Activated CD8-positive, alpha-beta T cell treated with anti-CD3 and anti-CD28 coated beads, Interleukin-2, amount 10 ng/mL, durations not matched to agents 7 days and 5 days (primary cell): ENCODE measurements at regions of chr6 and their contacts with region 1.

Region 1: GRCh38 chr6:157021344-157021992 is 244.3 kb downstream of the ARID1B start:
- DNase-seq: peak; percentile 91
- ATAC-seq: peak; percentile 87
- H3K4me3 Mint-ChIP-seq: peak overlapping the region; percentile 93
- H3K27ac Mint-ChIP-seq: peak overlapping the region; percentile 99
- H3K4me1 Mint-ChIP-seq: peaks cover 37% of the 10 kb centered on the region
- H3K27me3 Mint-ChIP-seq: no peaks in the 10 kb centered on the region

Region 2: DNA sequence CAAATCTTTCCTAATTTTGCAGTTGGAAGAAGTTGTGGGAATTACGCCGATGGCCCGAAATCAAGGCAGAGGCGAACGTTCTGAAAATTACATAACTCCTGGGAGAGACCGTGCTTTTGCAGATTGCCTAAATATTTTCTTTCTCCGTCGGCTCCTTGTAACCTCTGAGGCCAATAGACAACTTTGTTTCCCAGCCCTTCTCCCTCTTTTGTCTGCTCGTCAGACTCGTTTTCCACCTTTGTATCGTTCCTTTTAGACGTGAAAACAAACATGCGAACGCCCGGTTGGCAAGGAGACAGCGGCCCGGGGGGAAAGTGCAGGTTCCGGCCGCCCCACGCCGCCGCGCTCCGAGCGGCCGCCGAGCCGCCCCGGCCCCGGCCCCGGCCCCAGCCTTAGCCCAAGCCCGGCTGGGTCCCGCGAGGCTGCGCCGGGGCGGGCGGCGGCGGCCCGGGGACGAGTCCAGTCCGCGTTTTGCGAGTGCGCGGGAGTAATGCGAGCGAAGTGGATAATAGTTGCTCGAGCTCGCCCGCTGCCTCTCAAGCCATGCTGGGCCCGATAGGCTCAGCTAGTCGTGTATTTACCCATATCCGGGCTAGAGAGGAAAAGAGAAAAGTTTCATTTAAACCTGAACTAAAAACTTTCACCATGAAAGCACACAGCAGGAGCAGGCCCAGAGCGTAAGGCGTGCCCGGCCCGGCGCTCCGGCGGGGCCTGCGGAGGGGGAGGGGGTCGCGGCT is 244.5 kb before region 1 on chr6 and contains the start of gene ARID1B:
- CTCF ChIA-PET with region 1: interaction called, 5 read pairs
- POLR2A ChIA-PET with region 1: interaction called, 17 read pairs
- DNase-seq: peak; percentile 82
- ATAC-seq: peak; percentile 54
- H3K4me3 Mint-ChIP-seq: peak within 1 kb of the TSS; percentile 84
- H3K27ac Mint-ChIP-seq: peak within 1 kb of the TSS; percentile 96
- H3K4me1 Mint-ChIP-seq: peaks cover 27% of the 10 kb centered on the region
- H3K27me3 Mint-ChIP-seq: no peaks in the 10 kb centered on the region
- total RNA-seq, gene ARID1B: 60.9 to 62.4 TPM

Region 3: DNA sequence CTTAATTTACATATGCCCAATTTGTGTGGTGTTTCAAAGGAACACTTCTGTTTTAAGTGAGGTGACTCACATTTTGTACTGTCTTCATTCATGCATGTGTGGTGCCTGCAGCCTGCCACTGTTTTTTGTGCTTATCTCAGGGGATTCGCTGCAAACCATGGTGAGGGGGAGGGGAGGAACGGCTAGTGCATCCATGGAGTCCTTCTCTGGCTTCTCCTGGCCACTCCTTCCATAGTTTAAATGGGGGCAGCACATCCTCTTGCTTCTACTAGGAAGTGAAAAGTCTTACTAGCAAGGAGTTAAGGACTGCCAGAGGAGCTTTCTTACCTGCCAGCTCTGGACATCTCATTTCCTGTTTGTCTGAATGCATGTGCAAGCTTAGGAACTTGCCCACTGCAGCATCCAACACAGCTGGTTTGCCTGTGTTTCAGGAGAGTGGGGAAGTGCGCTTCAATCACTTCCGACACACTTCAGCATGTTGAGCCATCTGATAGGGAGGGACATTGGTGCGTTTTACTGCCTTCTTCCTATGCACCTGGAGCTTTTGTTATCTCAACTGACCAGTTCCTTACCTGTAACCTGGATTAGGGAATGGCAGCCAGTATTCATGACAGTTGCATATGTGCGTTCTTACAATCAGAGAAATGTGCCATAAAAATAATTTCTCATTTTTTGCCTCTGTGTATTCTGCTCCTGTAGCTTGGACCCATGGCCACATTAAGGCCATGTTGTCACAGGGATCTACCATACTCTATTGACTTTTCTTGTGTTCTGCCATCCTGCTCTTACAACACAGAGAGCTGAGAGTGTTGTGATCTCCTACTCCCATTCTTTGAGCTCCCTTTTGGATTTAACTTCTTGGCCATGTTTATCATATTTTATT is 33.0 kb before region 1 on chr6:
- CTCF ChIA-PET with region 1: no interaction called
- POLR2A ChIA-PET with region 1: interaction called, 10 read pairs
- DNase-seq: no peak
- ATAC-seq: no peak
- H3K4me3 Mint-ChIP-seq: no peak overlapping the region
- H3K27ac Mint-ChIP-seq: peak overlapping the region; percentile 2
- H3K4me1 Mint-ChIP-seq: peaks cover 28% of the 10 kb centered on the region
- H3K27me3 Mint-ChIP-seq: no peaks in the 10 kb centered on the region

Region 4: GRCh38 chr6:157054531-157054979 is 33.1 kb after region 1 on chr6:
- CTCF ChIA-PET with region 1: interaction called, 3 read pairs
- POLR2A ChIA-PET with region 1: interaction called, 13 read pairs
- DNase-seq: peak; percentile 67
- ATAC-seq: peak; percentile 95
- H3K4me3 Mint-ChIP-seq: peak overlapping the region; percentile 48
- H3K27ac Mint-ChIP-seq: peak overlapping the region; percentile 96
- H3K4me1 Mint-ChIP-seq: peaks cover 34% of the 10 kb centered on the region
- H3K27me3 Mint-ChIP-seq: no peaks in the 10 kb centered on the region